Right cardiac atrium (tissue), 5 donors: ENCODE measurements at regions of chr11 and their contacts with region 1.

Region 1: GRCh38 chr11:43944761-43945311 is 2.4 kb downstream of the C11orf96 start:
- DNase-seq: peak; percentile 74 to 92 (median 89)
- ATAC-seq: peak; percentile 26 to 47
- H3K4me3 ChIP-seq: peak overlapping the region; percentile 73
- H3K27ac ChIP-seq: peak overlapping the region; percentile 1
- H3K4me1 ChIP-seq: no peaks in the 10 kb centered on the region
- H3K27me3 ChIP-seq: no peaks in the 10 kb centered on the region

Region 2: GRCh38 chr11:43895601-43896000 is 49.2 kb before region 1 on chr11:
- intact Hi-C with region 1: loop called in 1 of 4 experiments (anchors 10 kb)
- DNase-seq: no peak
- ATAC-seq: no peak
- H3K4me3 ChIP-seq: no peak overlapping the region
- H3K27ac ChIP-seq: no peak overlapping the region
- H3K4me1 ChIP-seq: no peaks in the 10 kb centered on the region
- H3K27me3 ChIP-seq: no peaks in the 10 kb centered on the region

Region 3: GRCh38 chr11:43987384-43988039 is 42.7 kb after region 1 on chr11:
- intact Hi-C with region 1: loop called in 1 of 4 experiments (anchors 5 kb)
- DNase-seq: peak; percentile 96 to 97 (median 97)
- ATAC-seq: peak; percentile 89 to 92
- H3K4me3 ChIP-seq: no peak overlapping the region
- H3K27ac ChIP-seq: peak overlapping the region; percentile 65
- H3K4me1 ChIP-seq: peaks cover 9% of the 10 kb centered on the region
- H3K27me3 ChIP-seq: no peaks in the 10 kb centered on the region

Region 4: GRCh38 chr11:44036811-44037657 is 92.2 kb after region 1 on chr11:
- intact Hi-C with region 1: loop called in 2 of 4 experiments (anchors 5 to 10 kb)
- DNase-seq: peak; percentile 88 to 94 (median 92)
- ATAC-seq: peak; percentile 93 to 94
- H3K4me3 ChIP-seq: no peak overlapping the region
- H3K27ac ChIP-seq: no peak overlapping the region
- H3K4me1 ChIP-seq: peaks cover 4% of the 10 kb centered on the region
- H3K27me3 ChIP-seq: no peaks in the 10 kb centered on the region

Region 5: DNA sequence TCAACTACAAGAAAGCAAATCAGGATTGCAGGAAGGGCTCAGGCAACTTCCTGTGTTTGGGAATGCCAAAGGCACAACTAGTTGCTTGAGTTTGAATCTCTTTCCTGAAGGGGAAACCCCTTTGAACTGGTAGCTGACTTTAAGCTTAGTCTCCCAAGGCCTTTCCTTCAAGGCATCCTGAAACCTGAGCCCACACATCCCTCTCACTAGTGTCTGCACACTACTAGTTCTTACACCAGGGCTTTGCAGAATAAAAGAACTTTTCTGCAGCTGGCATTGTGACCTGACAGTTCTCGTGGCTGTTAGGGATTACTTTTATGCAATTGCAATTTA is 246.0 kb after region 1 on chr11:
- intact Hi-C with region 1: no loop called
- DNase-seq: no peak
- ATAC-seq: no peak
- H3K4me3 ChIP-seq: no peak overlapping the region
- H3K27ac ChIP-seq: no peak overlapping the region
- H3K4me1 ChIP-seq: no peaks in the 10 kb centered on the region
- H3K27me3 ChIP-seq: no peaks in the 10 kb centered on the region